ENCODE measurements at regions of chr1 and their contacts with region 1.

Region 1: DNA sequence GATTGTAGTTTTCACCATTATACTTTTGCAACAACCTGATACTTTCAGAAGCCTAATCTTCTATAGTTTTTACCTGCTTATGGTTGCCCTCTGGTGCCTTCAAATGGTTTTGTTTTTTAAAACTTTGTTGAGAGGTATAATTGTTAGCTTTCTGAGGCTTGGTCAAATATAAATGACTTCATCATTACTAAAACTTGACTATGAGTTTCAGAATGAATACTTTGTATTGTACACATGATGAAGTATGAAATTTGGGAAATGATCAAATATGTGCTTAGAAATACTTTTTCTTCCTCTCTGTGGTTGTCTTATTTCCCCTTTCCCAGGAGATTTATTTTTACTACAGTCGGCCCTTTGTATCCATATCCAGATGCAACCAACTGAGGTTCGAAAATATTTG is 151.8 kb upstream of the B3GALT2 start:
- DNase-seq: peak; percentile 53

Region 2: DNA sequence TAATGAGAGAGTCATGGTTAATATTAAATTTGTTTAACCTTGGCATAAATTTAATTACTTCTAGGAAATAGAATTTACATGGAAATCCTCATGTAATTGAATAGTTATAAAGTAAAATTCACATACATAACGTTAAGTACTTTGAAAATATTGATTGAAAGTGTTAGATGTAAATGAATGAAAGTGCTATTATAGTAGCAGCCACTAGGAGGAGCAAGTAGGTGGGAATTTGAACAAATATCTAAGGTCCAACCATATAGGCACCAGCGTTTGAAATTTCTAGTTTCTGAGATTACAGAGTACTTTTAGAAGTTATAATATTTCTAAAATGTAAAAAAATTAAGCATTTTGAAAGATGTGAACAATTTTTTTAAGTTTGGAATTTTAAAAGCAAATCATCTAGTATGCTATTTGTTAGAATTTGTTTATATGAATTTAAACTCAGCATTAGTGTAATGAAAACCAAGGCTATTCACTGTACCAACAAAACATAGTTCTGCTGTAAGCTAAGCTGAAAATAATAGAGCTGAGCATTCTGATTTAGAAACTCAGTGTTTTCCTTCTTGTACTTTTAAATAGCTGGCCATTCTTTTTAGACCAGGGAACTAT is 155.1 kb before region 1 on chr1:
- in situ Hi-C with region 1: loop called (anchors 25 kb)
- DNase-seq: peak; percentile 60

Region 3: DNA sequence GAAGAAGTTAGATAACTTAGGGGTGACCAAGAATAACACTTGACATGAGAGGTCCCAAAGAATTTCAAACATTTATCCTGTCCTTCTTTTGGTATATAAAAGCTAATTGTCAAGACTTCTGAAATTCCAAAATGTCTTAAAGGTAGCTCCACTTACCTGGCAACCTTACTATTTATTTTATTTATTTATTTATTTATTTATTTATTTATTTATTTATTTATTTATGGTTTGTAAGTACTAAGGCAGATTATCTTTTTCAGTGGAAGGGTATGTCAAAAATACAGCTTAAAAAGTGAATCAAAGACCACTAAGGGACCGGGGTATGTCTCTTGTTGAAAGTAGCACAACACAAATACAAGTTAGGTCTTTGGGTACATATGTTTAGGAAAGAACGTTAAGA is 469.0 kb after region 1 on chr1:
- in situ Hi-C with region 1: no loop called
- DNase-seq: no peak